CD14-positive monocyte (primary cell): ENCODE measurements at regions of chr11 and their contacts with region 1.

Region 1: GRCh38 chr11:72736452-72737069 is 15.6 kb downstream of the ARAP1 start:
- DNase-seq: peak; percentile 97 to 99 (median 98)
- H3K4me3 ChIP-seq: peak overlapping the region; percentile 33 to 88 (median 83)
- H3K4me3 Mint-ChIP-seq: peak overlapping the region; percentile 97 to 99
- H3K27ac ChIP-seq: peak overlapping the region; percentile 98 to 99
- H3K27ac Mint-ChIP-seq: peak overlapping the region; percentile 100
- H3K4me1 ChIP-seq: peaks cover 93 to 94% of the 10 kb centered on the region in 2 donors
- H3K4me1 Mint-ChIP-seq: peaks cover 87% of the 10 kb centered on the region
- H3K27me3 ChIP-seq: no peaks in the 10 kb centered on the region
- H3K27me3 Mint-ChIP-seq: peaks cover 0 to 4% (median 2%) of the 10 kb centered on the region in 3 donors
- CTCF ChIP-seq: no peak

Region 2: GRCh38 chr11:72793425-72794367 is 57.1 kb after region 1 on chr11 and contains the start of gene STARD10:
- intact Hi-C with region 1: loop called in 1 of 2 experiments (anchors 5 kb)
- DNase-seq: peak; percentile 95 to 97 (median 96)
- H3K4me3 ChIP-seq: peak within 1 kb of the TSS; percentile 46 to 90 (median 65)
- H3K4me3 Mint-ChIP-seq: peak within 1 kb of the TSS; percentile 96 to 99
- H3K27ac ChIP-seq: peak within 1 kb of the TSS; percentile 85 to 96
- H3K27ac Mint-ChIP-seq: peak within 1 kb of the TSS; percentile 96 to 100 (median 99)
- H3K4me1 ChIP-seq: peaks cover 50 to 63% of the 10 kb centered on the region in 2 donors
- H3K4me1 Mint-ChIP-seq: peaks cover 53% of the 10 kb centered on the region
- H3K27me3 ChIP-seq: no peaks in the 10 kb centered on the region
- H3K27me3 Mint-ChIP-seq: peaks cover 0 to 3% (median 2%) of the 10 kb centered on the region in 3 donors
- CTCF ChIP-seq: peak; percentile 99
- polyA plus RNA-seq, gene STARD10: 13.6 to 18.7 (median 15.4) TPM